MCF 10A (cell line): ENCODE measurements at regions of chr15 and their contacts with region 1.

Region 1: GRCh38 chr15:52071546-52071945 is 41.0 kb downstream of the BCL2L10 start:
- DNase-seq: peak; percentile 87
- H3K4me3 Mint-ChIP-seq: peak overlapping the region; percentile 26
- H3K27ac Mint-ChIP-seq: peak overlapping the region; percentile 66
- H3K4me1 Mint-ChIP-seq: peaks cover 51% of the 10 kb centered on the region
- H3K27me3 Mint-ChIP-seq: no peaks in the 10 kb centered on the region
- CTCF ChIP-seq: no peak

Region 2: GRCh38 chr15:51992976-51993375 is 78.6 kb before region 1 on chr15:
- CTCF ChIA-PET with region 1: interaction called, 4 read pairs
- POLR2A ChIA-PET with region 1: interaction called, 46 read pairs
- intact Hi-C with region 1: no loop called
- DNase-seq: peak; percentile 71
- H3K4me3 Mint-ChIP-seq: no peak overlapping the region
- H3K27ac Mint-ChIP-seq: no peak overlapping the region
- H3K4me1 Mint-ChIP-seq: peaks cover 28% of the 10 kb centered on the region
- H3K27me3 Mint-ChIP-seq: no peaks in the 10 kb centered on the region
- CTCF ChIP-seq: no peak

Region 3: GRCh38 chr15:52039925-52040781 is 31.4 kb before region 1 on chr15:
- CTCF ChIA-PET with region 1: interaction called, 4 read pairs
- POLR2A ChIA-PET with region 1: interaction called, 29 read pairs
- intact Hi-C with region 1: no loop called
- DNase-seq: no peak
- H3K4me3 Mint-ChIP-seq: no peak overlapping the region
- H3K27ac Mint-ChIP-seq: peak overlapping the region; percentile 77
- H3K4me1 Mint-ChIP-seq: peaks cover 41% of the 10 kb centered on the region
- H3K27me3 Mint-ChIP-seq: no peaks in the 10 kb centered on the region
- CTCF ChIP-seq: no peak

Region 4: GRCh38 chr15:52057996-52058395 is 13.6 kb before region 1 on chr15:
- CTCF ChIA-PET with region 1: interaction called, 16 read pairs
- POLR2A ChIA-PET with region 1: interaction called, 330 read pairs
- intact Hi-C with region 1: no loop called
- DNase-seq: no peak
- H3K4me3 Mint-ChIP-seq: no peak overlapping the region
- H3K27ac Mint-ChIP-seq: no peak overlapping the region
- H3K4me1 Mint-ChIP-seq: no peaks in the 10 kb centered on the region
- H3K27me3 Mint-ChIP-seq: no peaks in the 10 kb centered on the region
- CTCF ChIP-seq: no peak

Region 5: GRCh38 chr15:52288051-52288942 is 216.8 kb after region 1 on chr15:
- CTCF ChIA-PET with region 1: no interaction called
- POLR2A ChIA-PET with region 1: no interaction called
- intact Hi-C with region 1: no loop called
- DNase-seq: peak; percentile 89
- H3K4me3 Mint-ChIP-seq: peak overlapping the region; percentile 56
- H3K27ac Mint-ChIP-seq: peak overlapping the region; percentile 89
- H3K4me1 Mint-ChIP-seq: peaks cover 45% of the 10 kb centered on the region
- H3K27me3 Mint-ChIP-seq: no peaks in the 10 kb centered on the region
- CTCF ChIP-seq: no peak

Region 6: DNA sequence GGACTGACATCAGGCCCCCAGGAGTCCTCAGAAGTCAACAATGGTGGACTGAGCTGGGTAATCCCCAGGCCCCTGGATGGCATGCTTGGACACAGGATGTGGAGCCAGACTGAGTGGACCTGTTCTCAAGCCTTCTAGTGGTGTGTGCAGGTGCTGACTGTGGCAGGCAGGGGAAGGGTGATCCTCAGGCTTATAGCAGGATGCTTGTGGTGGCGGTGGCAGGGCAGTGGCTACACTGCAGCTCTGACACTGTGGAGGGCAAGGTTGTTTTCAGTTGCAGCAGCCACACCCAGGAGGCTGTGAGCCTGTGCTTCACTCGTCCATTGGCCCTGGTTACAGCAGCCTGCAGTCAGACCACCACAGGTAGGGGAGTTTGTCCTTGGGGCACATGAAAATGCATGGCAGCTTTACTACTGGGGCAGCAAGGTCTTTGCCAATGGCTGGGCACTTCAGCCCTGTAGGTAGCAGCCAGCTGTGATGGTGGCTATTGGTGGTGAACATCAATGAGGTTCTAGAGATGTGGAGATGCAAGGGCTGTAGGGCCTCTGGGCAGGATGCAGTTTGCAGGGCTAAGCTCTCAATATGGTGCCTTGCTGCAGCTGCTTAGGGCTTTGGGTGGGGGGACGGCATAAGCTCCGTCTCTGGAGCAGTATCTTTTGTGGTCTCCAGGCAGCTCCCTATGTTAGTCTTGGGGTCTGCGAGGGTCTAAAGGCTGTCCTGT is 474.6 kb after region 1 on chr15:
- CTCF ChIA-PET with region 1: no interaction called
- POLR2A ChIA-PET with region 1: no interaction called
- intact Hi-C with region 1: no loop called
- DNase-seq: no peak
- H3K4me3 Mint-ChIP-seq: no peak overlapping the region
- H3K27ac Mint-ChIP-seq: no peak overlapping the region
- H3K4me1 Mint-ChIP-seq: no peaks in the 10 kb centered on the region
- H3K27me3 Mint-ChIP-seq: no peaks in the 10 kb centered on the region
- CTCF ChIP-seq: no peak